Activated B cell treated with CpG ODN at 0.5 μM for 24 hours (primary cell): ENCODE measurements at regions of chr14 and their contacts with region 1.

Region 1: GRCh38 chr14:55430024-55430690 is 10.3 kb downstream of the TBPL2 start:
- DNase-seq: no peak
- ATAC-seq: peak; percentile 61
- H3K4me3 Mint-ChIP-seq: no peak overlapping the region
- H3K27ac Mint-ChIP-seq: no peak overlapping the region
- H3K4me1 Mint-ChIP-seq: peaks cover 7% of the 10 kb centered on the region
- H3K27me3 Mint-ChIP-seq: no peaks in the 10 kb centered on the region
- CTCF ChIP-seq: no peak

Region 2: DNA sequence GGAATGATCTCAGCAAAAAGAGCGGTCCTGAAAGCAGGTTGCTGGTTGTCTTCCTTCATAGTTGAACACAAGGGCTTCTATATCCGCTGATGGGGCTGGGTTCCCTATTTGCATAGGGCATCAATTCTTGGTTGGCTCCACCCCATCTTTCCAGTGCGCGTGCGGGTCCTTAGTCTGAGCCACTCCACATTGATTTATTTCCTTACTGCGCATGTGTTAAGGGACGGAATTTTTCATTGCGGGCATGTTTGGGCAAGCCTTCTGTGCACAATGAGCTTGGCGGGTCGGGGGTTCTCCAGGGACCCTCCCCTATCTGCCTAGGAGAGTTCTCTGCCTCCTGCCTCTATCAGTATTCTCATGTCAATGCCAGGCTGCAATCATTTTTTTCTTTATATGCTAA is 217.5 kb before region 1 on chr14:
- CTCF ChIA-PET with region 1: interaction called, 4 read pairs
- POLR2A ChIA-PET with region 1: no interaction called
- intact Hi-C with region 1: loop called (anchors 1 kb)
- DNase-seq: no peak
- ATAC-seq: no peak
- H3K4me3 Mint-ChIP-seq: no peak overlapping the region
- H3K27ac Mint-ChIP-seq: no peak overlapping the region
- H3K4me1 Mint-ChIP-seq: peaks cover 2% of the 10 kb centered on the region
- H3K27me3 Mint-ChIP-seq: no peaks in the 10 kb centered on the region
- CTCF ChIP-seq: no peak

Region 3: GRCh38 chr14:55245657-55246268 is 184.4 kb before region 1 on chr14:
- CTCF ChIA-PET with region 1: no interaction called
- POLR2A ChIA-PET with region 1: no interaction called
- intact Hi-C with region 1: loop called (anchors 1 kb)
- DNase-seq: no peak
- ATAC-seq: no peak
- H3K4me3 Mint-ChIP-seq: no peak overlapping the region
- H3K27ac Mint-ChIP-seq: no peak overlapping the region
- H3K4me1 Mint-ChIP-seq: no peaks in the 10 kb centered on the region
- H3K27me3 Mint-ChIP-seq: peaks cover 23% of the 10 kb centered on the region
- CTCF ChIP-seq: no peak

Region 4: GRCh38 chr14:55477680-55478079 is 47.5 kb after region 1 on chr14:
- CTCF ChIA-PET with region 1: no interaction called
- POLR2A ChIA-PET with region 1: no interaction called
- intact Hi-C with region 1: no loop called
- DNase-seq: no peak
- ATAC-seq: no peak
- H3K4me3 Mint-ChIP-seq: no peak overlapping the region
- H3K27ac Mint-ChIP-seq: no peak overlapping the region
- H3K4me1 Mint-ChIP-seq: no peaks in the 10 kb centered on the region
- H3K27me3 Mint-ChIP-seq: no peaks in the 10 kb centered on the region
- CTCF ChIP-seq: no peak

Region 5: DNA sequence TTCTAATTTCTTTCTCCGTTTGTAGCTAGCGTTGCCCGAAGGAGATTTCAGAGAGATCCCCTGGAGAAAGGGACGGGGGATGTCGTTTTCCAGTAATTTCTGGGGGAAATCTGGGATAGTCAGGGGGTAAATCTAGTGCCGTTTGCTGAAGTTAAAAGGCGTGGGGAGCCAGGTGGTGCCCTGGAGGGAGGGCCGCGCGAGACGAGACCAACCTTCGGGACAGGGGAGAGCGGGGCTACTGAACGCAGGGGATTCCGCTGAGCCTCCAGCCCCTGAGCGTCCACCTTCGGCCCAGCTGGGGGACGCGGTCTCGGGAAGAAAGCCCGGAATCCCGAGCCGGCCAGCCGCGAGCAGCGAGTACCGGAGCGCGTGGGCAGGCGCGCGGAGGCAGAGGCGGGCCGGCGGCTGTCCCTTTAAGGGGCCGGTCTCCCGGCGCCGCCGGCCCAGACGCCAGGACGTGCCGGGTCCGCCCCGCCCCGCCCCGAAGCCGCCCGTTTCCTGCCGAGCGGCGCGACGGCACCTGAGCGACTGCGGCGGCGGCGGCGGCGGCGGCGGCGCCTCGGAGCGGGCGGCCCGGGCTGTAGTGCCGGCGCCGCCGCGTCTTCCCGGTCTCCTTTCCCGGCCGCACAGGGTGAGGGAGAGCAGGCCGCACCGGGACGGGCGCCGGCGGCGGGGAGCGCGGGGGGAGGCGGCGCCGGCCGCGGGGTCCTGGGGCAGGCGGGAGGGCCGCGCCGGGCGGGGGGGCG is 149.7 kb after region 1 on chr14 and contains the start of gene KTN1:
- CTCF ChIA-PET with region 1: no interaction called
- POLR2A ChIA-PET with region 1: no interaction called
- intact Hi-C with region 1: no loop called
- DNase-seq: peak; percentile 84
- ATAC-seq: peak; percentile 86
- H3K4me3 Mint-ChIP-seq: peak within 1 kb of the TSS; percentile 96
- H3K27ac Mint-ChIP-seq: peak within 1 kb of the TSS; percentile 91
- H3K4me1 Mint-ChIP-seq: peaks cover 33% of the 10 kb centered on the region
- H3K27me3 Mint-ChIP-seq: no peaks in the 10 kb centered on the region
- CTCF ChIP-seq: no peak
- total RNA-seq, gene KTN1: 108 and 116 TPM in 2 replicates

Region 6: GRCh38 chr14:55913324-55914025 is 483.3 kb after region 1 on chr14:
- CTCF ChIA-PET with region 1: no interaction called
- POLR2A ChIA-PET with region 1: no interaction called
- intact Hi-C with region 1: no loop called
- DNase-seq: no peak
- ATAC-seq: no peak
- H3K4me3 Mint-ChIP-seq: no peak overlapping the region
- H3K27ac Mint-ChIP-seq: no peak overlapping the region
- H3K4me1 Mint-ChIP-seq: no peaks in the 10 kb centered on the region
- H3K27me3 Mint-ChIP-seq: peaks cover 5% of the 10 kb centered on the region
- CTCF ChIP-seq: no peak